PC-3 (cell line): ENCODE measurements at regions of chr3 and their contacts with region 1.

Region 1: DNA sequence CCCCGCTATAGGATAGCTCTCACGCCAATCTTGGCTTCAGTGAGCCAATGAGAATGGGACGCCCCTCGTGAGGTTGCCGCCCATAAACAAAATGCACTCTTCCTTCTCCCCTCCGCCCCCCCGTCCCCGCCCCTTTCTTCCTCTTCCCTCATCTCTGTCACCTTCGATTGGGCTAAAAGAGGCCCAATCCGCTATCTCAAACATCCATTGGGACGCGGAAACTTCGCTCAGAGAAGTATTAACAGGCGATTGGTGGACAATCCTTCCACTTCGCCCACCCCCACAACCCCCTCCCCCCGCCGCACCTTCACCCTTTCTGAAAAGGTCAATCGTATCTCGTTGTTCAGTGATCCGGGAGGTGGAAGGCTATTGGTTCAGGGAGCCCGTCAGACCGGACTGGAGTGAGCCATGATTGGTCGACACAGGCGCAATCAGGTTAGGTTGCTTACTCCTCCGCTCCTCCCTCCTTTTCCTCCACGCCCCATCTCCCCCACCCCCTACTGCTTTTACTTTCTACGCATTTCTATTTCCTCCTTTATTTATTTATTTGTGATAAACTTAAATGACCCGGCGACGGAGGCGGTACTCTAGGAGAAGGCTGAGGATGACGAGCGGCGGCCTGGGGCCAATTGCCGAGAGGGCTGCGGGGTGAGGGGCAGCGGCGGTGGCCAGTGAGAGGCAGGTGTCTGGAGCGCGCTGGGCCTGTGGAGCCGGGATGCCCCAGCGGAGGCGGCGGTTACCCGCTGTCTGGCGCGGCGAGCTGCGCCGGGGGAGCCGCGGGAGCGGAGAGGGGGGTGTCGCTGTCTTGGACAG is 447 bp upstream of the ZBTB20 start:
- DNase-seq: peak; percentile 99
- ATAC-seq: peak; percentile 83
- H3K4me3 ChIP-seq: peak overlapping the region; percentile 84
- H3K27ac ChIP-seq: peak overlapping the region; percentile 29
- H3K4me1 ChIP-seq: peaks cover 7% of the 10 kb centered on the region; the same call in 1 of the 2 replicates
- H3K27me3 ChIP-seq: no peaks in the 10 kb centered on the region
- CTCF ChIP-seq: no peak

Region 2: DNA sequence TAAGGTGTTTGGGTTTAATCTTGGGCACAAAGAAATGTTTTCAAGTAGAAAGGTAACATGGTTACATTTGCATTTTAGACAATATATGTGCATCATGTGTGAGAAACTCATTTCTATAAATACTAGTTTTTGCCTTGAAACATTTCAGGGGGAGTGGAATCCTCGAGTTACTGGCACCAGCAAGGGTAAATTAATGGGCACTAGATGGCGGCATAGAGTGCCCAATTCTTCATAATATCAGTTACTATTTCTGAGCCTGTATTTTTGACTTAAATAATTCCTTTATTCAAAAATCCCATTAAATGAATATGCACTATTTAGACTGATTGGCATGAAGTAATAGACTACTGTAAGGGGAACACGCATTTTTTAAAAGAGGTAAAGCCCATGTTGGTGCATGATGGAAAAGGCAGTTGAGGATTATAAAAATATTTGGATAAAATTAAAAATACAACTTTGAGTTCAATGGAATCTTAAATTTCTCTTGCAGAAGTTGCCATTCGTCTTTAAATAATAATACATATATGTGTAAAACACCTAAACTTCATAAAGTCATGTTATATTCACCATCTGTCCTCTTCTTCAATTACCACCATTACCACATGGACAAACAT is 106.8 kb before region 1 on chr3:
- CTCF ChIA-PET with region 1: no interaction called
- POLR2A ChIA-PET with region 1: interaction called, 20 read pairs
- intact Hi-C with region 1: loop called (anchors 5 kb)
- DNase-seq: peak; percentile 63
- ATAC-seq: peak; percentile 78
- H3K4me3 ChIP-seq: no peak overlapping the region
- H3K27ac ChIP-seq: no peak overlapping the region
- H3K4me1 ChIP-seq: no peaks in the 10 kb centered on the region
- H3K27me3 ChIP-seq: no peaks in the 10 kb centered on the region
- CTCF ChIP-seq: peak; percentile 86

Region 3: GRCh38 chr3:115099986-115100571 is 47.5 kb before region 1 on chr3:
- CTCF ChIA-PET with region 1: no interaction called
- POLR2A ChIA-PET with region 1: no interaction called
- intact Hi-C with region 1: loop called (anchors 2 kb)
- DNase-seq: peak; percentile 22
- ATAC-seq: peak; percentile 92
- H3K4me3 ChIP-seq: peak overlapping the region; percentile 59
- H3K27ac ChIP-seq: no peak overlapping the region
- H3K4me1 ChIP-seq: 0 out of 2 replicates have a peak, but pooled peaks cover 3% of the 10 kb centered on the region
- H3K27me3 ChIP-seq: no peaks in the 10 kb centered on the region
- CTCF ChIP-seq: no peak

Region 4: DNA sequence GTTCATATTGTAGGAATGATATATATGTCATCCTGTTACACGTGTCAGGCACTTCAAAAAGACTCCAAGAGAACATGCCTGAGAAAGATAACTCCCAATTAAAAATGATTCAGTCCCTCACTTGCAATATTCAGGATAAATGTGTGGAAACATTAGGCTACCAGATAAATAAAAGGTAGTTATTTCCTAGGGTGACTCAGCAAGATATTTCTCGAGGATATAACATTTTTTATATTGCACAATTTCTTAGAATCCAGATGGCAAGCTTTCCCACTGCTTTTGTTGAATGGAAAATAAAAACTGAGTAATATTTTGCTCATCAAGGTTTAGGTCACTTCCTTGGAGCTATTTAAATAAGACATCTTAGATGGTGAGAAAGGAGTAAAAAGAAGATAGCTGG is 657.2 kb after region 1 on chr3:
- CTCF ChIA-PET with region 1: no interaction called
- POLR2A ChIA-PET with region 1: no interaction called
- intact Hi-C with region 1: loop called (anchors 5 kb)
- DNase-seq: peak; percentile 96
- ATAC-seq: peak; percentile 62
- H3K4me3 ChIP-seq: peak overlapping the region; percentile 31; the same call in 1 of the 2 replicates
- H3K27ac ChIP-seq: peak overlapping the region; percentile 98
- H3K4me1 ChIP-seq: peaks cover 63% of the 10 kb centered on the region
- H3K27me3 ChIP-seq: no peaks in the 10 kb centered on the region
- CTCF ChIP-seq: no peak